HAP-1 (cell line): ENCODE measurements at regions of chr18 and their contacts with region 1.

Region 1: DNA sequence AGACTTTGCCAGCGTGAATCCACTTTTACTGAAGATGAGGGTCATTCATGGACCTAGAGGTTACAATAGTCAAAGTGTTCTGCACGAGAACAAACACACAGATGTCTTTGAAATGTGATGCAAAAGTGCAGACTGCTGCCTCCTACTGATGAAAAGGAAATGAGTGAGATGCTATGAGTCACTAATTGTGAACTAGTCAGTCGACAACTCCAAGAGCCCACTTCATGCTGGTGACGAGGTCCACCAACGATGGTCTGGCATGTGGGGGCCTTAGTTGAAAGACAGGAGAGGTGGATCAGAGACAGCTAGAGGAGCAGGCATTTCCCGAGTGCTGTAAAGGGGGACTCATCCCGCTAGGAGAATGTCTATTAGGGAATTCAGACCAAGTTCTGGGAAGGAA is 17.1 kb upstream of the ZNF236 start:
- DNase-seq: no peak
- H3K4me3 ChIP-seq: no peak overlapping the region
- H3K4me1 ChIP-seq: peaks cover 2% of the 10 kb centered on the region; the same call in 1 of the 2 replicates
- H3K27me3 ChIP-seq: no peaks in the 10 kb centered on the region

Region 2: DNA sequence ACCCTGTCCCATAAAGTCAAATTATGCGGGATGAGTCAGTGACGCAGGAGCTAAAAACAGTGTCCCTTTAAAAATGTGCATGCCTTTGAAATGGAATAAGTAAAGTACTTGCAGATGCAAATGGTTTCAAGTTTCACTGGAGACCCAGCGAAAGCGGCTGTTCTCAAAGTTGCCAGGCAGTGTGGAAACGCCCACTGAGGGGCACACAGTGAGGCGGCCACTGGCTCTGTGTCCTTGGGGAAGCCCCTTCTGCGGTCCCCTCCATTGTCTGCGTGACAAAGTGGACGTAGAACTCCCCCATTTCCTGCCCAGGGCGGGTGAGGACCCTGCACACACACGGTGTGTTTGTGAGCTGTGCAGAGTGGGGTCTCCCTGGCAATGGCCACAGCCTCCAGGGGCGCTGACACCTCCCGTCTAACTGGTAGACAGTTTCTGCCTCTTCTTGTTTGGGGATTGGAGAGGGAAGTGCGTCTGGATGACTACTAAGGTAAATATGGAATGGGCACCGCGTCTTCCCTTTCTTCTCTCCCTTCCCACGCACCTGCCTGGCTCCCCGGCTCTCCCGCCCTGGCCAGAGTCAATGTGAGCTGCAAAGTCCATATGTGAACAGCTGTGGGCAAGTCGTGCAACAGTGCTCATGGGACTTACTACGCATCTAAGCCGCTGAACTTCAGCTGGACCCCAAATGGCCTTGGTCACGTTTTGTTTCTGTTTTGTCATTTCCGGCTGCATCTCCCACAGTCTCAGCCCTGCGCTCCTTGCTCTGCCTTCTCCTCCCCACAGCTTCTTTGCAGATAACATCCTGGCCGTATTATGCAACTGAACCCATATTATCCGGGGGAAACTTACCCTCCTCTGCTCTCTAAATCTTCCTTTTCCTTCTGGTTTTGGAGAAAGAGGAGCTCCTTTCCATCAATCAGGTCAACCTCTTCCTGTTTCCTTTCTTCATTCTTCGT is 276.5 kb before region 1 on chr18:
- in situ Hi-C with region 1: no loop called
- DNase-seq: peak; percentile 24 to 42
- H3K4me3 ChIP-seq: no peak overlapping the region
- H3K4me1 ChIP-seq: peaks cover 15% of the 10 kb centered on the region
- H3K27me3 ChIP-seq: 0 out of 2 replicates have a peak, but pooled peaks cover 1% of the 10 kb centered on the region

Region 3: GRCh38 chr18:76982841-76983587 is 177.8 kb after region 1 on chr18:
- in situ Hi-C with region 1: loop called (anchors 5 kb)
- DNase-seq: peak; percentile 59 to 93
- H3K4me3 ChIP-seq: no peak overlapping the region
- H3K4me1 ChIP-seq: no peaks in the 10 kb centered on the region
- H3K27me3 ChIP-seq: no peaks in the 10 kb centered on the region

Region 4: GRCh38 chr18:77512152-77512551 is 706.9 kb after region 1 on chr18:
- in situ Hi-C with region 1: no loop called
- DNase-seq: no peak
- H3K4me3 ChIP-seq: no peak overlapping the region
- H3K4me1 ChIP-seq: no peaks in the 10 kb centered on the region
- H3K27me3 ChIP-seq: no peaks in the 10 kb centered on the region